Activated B cell treated with CpG ODN at 0.5 μM for 24 hours (primary cell): ENCODE measurements at regions of chr1 and their contacts with region 1.

Region 1: GRCh38 chr1:168082008-168082876 is 54.5 kb downstream of the GPR161 start:
- DNase-seq: peak; percentile 40
- ATAC-seq: peak; percentile 92
- H3K4me3 Mint-ChIP-seq: no peak overlapping the region
- H3K27ac Mint-ChIP-seq: no peak overlapping the region
- H3K4me1 Mint-ChIP-seq: no peaks in the 10 kb centered on the region
- H3K27me3 Mint-ChIP-seq: no peaks in the 10 kb centered on the region
- CTCF ChIP-seq: no peak

Region 2: DNA sequence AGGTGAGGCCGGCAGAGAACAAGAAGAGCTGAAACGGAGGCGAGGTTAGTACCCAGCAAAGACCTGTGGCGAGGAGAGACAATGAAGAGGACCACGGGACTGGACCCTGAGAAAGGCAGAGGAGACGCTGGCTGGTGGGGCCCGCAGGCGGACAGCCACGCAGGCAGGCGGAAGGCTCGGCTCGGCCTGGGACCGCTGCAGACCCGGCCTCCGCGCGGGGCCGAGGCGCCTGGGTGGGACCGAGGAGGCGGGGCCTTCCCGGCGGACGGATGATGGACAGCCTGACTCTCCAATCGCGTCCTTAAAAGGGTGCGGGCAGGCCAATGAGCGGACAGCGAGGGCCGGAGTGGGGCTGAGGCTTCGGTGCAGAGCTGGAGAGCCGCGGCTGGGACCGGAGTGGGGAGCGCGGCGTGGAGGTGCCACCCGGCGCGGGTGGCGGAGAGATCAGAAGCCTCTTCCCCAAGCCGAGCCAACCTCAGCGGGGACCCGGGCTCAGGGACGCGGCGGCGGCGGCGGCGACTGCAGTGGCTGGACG is 360.6 kb before region 1 on chr1 and contains the start of gene MPZL1:
- CTCF ChIA-PET with region 1: interaction called, 3 read pairs
- POLR2A ChIA-PET with region 1: no interaction called
- intact Hi-C with region 1: loop called (anchors 5 kb)
- DNase-seq: peak; percentile 94
- ATAC-seq: peak; percentile 96
- H3K4me3 Mint-ChIP-seq: peak within 1 kb of the TSS; percentile 94
- H3K27ac Mint-ChIP-seq: peak within 1 kb of the TSS; percentile 96
- H3K4me1 Mint-ChIP-seq: peaks cover 77% of the 10 kb centered on the region
- H3K27me3 Mint-ChIP-seq: no peaks in the 10 kb centered on the region
- CTCF ChIP-seq: no peak
- total RNA-seq, gene MPZL1: 27.2 and 27.4 TPM in 2 replicates

Region 3: GRCh38 chr1:168069384-168069783 is 12.9 kb before region 1 on chr1:
- CTCF ChIA-PET with region 1: interaction called, 10 read pairs
- POLR2A ChIA-PET with region 1: no interaction called
- intact Hi-C with region 1: no loop called
- DNase-seq: no peak
- ATAC-seq: no peak
- H3K4me3 Mint-ChIP-seq: no peak overlapping the region
- H3K27ac Mint-ChIP-seq: no peak overlapping the region
- H3K4me1 Mint-ChIP-seq: no peaks in the 10 kb centered on the region
- H3K27me3 Mint-ChIP-seq: no peaks in the 10 kb centered on the region
- CTCF ChIP-seq: no peak

Region 4: DNA sequence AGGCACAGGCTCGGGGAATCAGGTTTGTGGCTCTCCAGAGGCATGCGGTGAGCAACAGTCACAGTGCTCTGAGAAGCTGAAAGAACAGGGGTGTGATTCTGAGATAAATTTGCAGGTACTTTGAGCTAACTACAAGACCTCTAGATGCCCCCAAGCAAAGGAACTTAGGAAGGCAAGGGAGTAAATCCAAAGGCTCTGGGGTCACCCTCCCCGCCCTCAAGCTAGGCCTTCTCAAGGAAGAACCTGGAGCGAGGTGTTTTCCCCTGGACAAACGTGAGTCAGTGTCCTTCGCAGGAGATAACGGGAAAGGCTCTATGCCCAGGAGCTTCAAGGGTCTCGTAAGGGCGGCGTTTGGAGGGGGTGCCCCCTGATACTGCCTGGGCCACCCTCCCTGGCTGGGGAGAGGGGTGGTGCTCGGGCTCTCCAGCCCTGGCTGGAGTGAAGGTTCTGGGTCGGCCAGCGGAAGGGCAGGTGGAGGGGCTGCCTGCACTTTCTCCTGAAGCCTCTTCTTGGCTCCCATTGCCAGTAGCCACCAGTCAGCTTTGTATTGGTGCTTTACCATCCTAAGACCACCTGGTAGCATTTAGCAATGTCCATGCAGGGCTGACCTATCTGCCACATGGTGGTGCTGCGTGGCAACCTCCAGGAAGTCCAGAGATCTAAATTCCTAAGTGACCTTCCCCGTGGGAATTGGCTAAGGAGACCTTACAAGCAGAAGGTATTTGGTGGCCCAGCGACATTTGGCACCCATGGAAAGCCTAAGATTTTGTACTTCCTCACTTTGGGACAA is 10.5 kb after region 1 on chr1:
- CTCF ChIA-PET with region 1: interaction called, 13 read pairs
- POLR2A ChIA-PET with region 1: interaction called, 10 read pairs
- intact Hi-C with region 1: no loop called
- DNase-seq: no peak
- ATAC-seq: no peak
- H3K4me3 Mint-ChIP-seq: no peak overlapping the region
- H3K27ac Mint-ChIP-seq: no peak overlapping the region
- H3K4me1 Mint-ChIP-seq: no peaks in the 10 kb centered on the region
- H3K27me3 Mint-ChIP-seq: peaks cover 3% of the 10 kb centered on the region
- CTCF ChIP-seq: no peak

Region 5: DNA sequence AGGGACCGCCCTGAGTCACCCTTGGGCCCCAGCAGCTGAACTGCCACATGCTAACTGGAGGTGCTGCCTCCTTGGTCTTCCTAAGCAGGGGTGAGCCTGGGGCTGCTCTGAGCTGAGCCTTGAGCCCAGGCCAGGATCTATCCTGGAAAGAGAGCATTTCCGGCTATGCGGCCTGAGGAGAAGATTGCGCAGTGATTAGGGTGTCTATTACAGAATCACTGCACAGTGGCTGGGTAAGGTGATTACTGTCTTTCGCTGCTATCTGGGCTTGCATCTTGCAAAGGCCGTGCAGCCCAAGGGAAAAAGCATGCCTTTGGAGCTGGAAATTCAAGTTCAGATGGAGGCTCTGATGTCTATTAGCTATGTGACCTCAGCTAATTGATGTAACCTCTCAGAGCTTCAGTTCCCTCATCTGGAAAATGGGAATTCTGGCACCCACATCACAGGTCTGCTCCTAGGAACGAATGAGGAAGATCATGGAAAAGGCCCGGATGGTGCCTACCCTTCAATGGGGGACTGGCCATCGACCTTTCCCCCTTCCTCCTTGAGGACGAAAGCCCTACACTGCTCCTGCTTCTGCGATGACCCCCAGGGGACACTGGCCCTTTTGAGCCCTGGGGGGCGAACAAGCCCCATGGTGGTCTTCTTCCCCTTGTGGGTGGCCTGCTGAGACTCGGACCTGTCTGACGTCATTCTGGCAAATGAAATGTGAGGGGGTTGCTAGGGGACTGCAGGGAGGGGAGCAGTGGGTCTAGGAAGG is 16.5 kb after region 1 on chr1:
- CTCF ChIA-PET with region 1: interaction called, 13 read pairs
- POLR2A ChIA-PET with region 1: interaction called, 10 read pairs
- intact Hi-C with region 1: no loop called
- DNase-seq: no peak
- ATAC-seq: no peak
- H3K4me3 Mint-ChIP-seq: no peak overlapping the region
- H3K27ac Mint-ChIP-seq: no peak overlapping the region
- H3K4me1 Mint-ChIP-seq: no peaks in the 10 kb centered on the region
- H3K27me3 Mint-ChIP-seq: peaks cover 6% of the 10 kb centered on the region
- CTCF ChIP-seq: no peak

Region 6: DNA sequence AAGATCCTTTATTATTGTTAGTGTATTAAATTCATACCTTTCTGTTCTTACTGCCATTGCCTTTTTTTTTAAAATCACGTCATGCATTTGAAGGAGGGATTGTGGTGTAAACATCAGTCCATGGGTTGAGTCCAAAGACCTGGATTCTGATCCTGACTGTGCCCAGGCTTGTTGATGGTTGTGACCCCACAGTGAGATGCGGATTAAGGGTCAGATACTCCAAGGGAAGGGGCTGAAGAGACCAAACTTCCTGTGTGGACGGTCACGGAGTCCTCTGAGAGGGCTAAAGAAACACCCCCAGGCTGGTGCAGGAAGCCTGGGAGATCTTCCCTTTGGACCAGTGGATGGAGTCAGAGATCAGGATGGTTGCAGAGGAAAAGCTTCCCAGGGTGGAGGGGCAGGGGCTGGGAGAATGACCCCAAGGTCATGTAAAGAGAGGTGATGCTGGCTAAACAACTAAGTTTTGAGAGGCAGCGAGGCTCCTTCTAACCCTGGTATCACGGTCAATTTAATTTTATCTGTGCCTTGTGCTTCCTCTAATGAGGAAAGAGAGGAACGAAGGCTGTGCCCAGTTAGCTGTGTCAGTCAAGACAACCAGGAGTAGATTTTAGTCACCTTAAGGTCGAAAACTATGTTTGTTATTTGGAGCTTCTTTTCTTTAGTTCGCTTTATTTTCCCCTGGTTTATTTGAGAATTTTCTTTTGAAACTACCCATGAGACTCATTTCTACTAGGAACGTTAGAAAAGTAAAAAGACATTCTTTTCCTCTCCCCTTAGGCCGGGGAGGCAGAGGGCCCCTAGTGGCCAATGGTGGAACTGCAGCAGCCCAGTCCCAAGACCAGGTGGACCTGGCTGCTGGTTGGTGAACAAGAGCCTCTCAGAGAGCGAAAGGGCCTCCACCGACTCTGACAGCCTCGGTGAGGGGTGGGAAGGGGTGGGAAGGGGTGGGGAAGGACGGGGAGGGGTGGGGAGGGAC is 63.2 kb after region 1 on chr1:
- CTCF ChIA-PET with region 1: interaction called, 6 read pairs
- POLR2A ChIA-PET with region 1: interaction called, 4 read pairs
- intact Hi-C with region 1: loop called (anchors 2 kb)
- DNase-seq: peak; percentile 80
- ATAC-seq: peak; percentile 100
- H3K4me3 Mint-ChIP-seq: peak overlapping the region; percentile 32
- H3K27ac Mint-ChIP-seq: peak overlapping the region; percentile 53
- H3K4me1 Mint-ChIP-seq: peaks cover 14% of the 10 kb centered on the region
- H3K27me3 Mint-ChIP-seq: no peaks in the 10 kb centered on the region
- CTCF ChIP-seq: peak; percentile 91